Activated CD4-positive, alpha-beta T cell treated with anti-CD3 and anti-CD28 coated beads, Interleukin-2, amount 10 ng/mL, durations not matched to agents 24 days and 14 days (primary cell): ENCODE measurements at regions of chr19 and their contacts with region 1.

Region 1: GRCh38 chr19:18328340-18329034 is 5.6 kb upstream of the LSM4 start:
- DNase-seq: peak; percentile 96
- H3K4me3 Mint-ChIP-seq: peak overlapping the region; percentile 70
- H3K27ac Mint-ChIP-seq: peak overlapping the region; percentile 52
- H3K4me1 Mint-ChIP-seq: peaks cover 17% of the 10 kb centered on the region
- H3K27me3 Mint-ChIP-seq: no peaks in the 10 kb centered on the region

Region 2: DNA sequence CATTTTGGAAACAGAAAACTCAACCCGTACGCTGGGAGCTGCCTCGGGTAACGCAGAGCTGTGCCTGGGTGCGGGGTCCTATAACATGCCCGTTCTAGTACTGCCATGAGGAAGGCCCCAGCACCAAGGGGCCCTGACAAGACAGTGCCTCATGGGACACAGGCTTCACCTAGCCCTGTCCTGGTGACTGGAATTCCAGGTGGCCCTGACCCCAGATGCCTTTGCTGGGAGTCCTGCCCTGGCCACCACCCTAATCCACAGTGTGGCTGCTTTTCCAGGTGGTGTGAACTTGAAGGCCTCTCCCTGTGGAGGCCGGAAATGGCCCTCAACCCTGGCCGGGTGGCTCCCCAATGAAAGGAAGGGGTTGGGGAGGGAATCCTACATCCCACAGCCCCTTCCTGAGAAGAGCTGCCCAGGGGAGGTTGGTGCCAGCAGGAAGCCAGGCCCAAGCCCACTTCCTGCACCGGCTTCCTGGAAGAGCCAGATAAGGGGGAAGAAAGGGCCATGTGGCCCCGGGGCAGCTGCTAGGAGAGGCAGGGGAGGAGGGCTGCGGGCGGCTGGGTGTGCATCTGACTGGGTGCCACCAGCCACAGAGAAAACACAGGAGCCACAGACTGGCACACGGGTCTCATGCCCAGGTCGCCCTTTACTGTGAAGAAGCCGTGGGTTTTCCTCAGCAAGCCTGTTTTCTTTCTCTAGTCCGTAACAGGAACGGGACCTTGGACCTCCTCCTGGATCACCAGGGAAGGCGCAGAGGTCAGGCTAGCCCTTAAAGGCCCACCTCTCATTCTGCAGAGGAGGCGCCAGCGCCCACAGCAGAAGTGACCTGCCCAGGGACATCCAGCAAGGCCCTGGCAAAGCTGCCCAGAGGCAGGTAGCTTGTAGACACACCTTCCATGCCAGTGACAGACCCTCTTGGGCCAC is 10.3 kb before region 1 on chr19:
- intact Hi-C with region 1: no loop called
- DNase-seq: peak; percentile 83
- H3K4me3 Mint-ChIP-seq: peak overlapping the region; percentile 71
- H3K27ac Mint-ChIP-seq: peak overlapping the region; percentile 95
- H3K4me1 Mint-ChIP-seq: peaks cover 48% of the 10 kb centered on the region
- H3K27me3 Mint-ChIP-seq: no peaks in the 10 kb centered on the region

Region 3: GRCh38 chr19:18419195-18419698 is 90.8 kb after region 1 on chr19 and contains the start of gene SSBP4:
- intact Hi-C with region 1: loop called (anchors 5 kb)
- DNase-seq: peak; percentile 94
- H3K4me3 Mint-ChIP-seq: peak within 1 kb of the TSS; percentile 99
- H3K27ac Mint-ChIP-seq: peak within 1 kb of the TSS; percentile 89
- H3K4me1 Mint-ChIP-seq: peaks cover 72% of the 10 kb centered on the region
- H3K27me3 Mint-ChIP-seq: no peaks in the 10 kb centered on the region
- total RNA-seq, gene SSBP4: 154 TPM in 2 replicates